OCI-LY7 (cell line): ENCODE measurements at regions of chr4 and their contacts with region 1.

Region 1: GRCh38 chr4:13615161-13615560 is 12.4 kb downstream of the BOD1L1 start:
- DNase-seq: peak; percentile 64
- H3K4me3 ChIP-seq: peak overlapping the region; percentile 4
- H3K27ac ChIP-seq: peak overlapping the region; percentile 53
- H3K4me1 ChIP-seq: peaks cover 55% of the 10 kb centered on the region
- CTCF ChIP-seq: no peak

Region 2: GRCh38 chr4:13484122-13484748 is 130.9 kb before region 1 on chr4 and contains the start of gene RAB28:
- CTCF ChIA-PET with region 1: no interaction called
- POLR2A ChIA-PET with region 1: no interaction called
- intact Hi-C with region 1: loop called (anchors 5 kb)
- DNase-seq: peak; percentile 94
- H3K4me3 ChIP-seq: peak within 1 kb of the TSS; percentile 95
- H3K27ac ChIP-seq: peak within 1 kb of the TSS; percentile 56
- H3K4me1 ChIP-seq: peaks cover 20% of the 10 kb centered on the region
- CTCF ChIP-seq: no peak
- total RNA-seq, gene RAB28: 30.8 and 59.4 TPM in 2 replicates

Region 3: GRCh38 chr4:13762130-13762529 is 147.0 kb after region 1 on chr4:
- CTCF ChIA-PET with region 1: no interaction called
- POLR2A ChIA-PET with region 1: no interaction called
- intact Hi-C with region 1: no loop called
- DNase-seq: no peak
- H3K4me3 ChIP-seq: no peak overlapping the region
- H3K27ac ChIP-seq: no peak overlapping the region
- H3K4me1 ChIP-seq: no peaks in the 10 kb centered on the region
- CTCF ChIP-seq: no peak